Sigmoid colon (tissue), 7 donors: ENCODE measurements at regions of chr7 and their contacts with region 1.

Region 1: DNA sequence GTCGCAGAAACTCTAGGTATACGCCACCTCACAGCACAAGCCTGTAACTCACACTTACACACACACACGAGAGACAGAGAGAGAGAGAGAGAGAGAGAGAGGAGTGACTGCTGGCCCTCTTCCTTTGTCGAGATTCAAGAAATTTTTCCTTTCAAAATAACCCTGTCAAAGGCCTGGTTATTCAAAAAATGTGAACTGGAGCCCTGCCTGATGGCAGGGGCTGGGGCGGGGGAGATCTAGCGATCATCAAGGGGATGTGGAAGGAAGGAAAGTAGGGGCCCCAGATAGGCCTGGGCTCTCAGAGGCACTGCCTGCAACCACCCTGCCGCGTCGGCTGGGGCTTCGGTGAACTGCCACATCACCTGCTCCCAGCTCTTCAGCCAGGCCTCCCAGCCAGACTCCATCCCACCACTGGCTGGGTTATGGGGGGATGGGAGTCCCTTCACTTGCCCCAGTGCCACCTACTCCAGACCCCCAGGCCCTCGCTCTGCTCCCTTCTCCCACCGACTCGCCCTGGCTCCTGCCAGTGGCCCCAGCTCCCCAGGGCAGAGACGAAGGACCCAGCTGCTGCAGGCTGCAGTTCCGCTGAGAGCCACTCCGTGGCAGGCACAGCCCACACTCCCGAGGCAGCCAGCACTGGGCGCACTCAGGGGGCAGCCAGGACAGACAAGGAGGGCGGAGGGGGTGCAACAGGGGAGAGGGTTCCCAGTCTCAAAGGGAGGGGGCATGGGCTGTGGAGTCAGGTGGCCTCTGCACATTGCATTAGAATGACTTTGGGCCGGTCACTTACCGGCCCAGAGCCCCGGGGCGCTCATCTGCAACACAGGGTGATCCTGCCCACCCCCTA is 15.3 kb downstream of the KCNH2 start:
- DNase-seq: peak; percentile 85
- H3K4me3 ChIP-seq: no peak overlapping the region
- H3K27ac ChIP-seq: peak overlapping the region; percentile 79 to 97 (median 90)
- H3K4me1 ChIP-seq: peaks cover 0 to 78% (median 75%) of the 10 kb centered on the region in 4 donors
- H3K27me3 ChIP-seq: no peaks in the 10 kb centered on the region
- CTCF ChIP-seq: peak; percentile 98
- EP300 ChIP-seq: no peak
- POLR2A ChIP-seq: no peak

Region 2: GRCh38 chr7:150378853-150379440 is 583.8 kb before region 1 on chr7 and contains the start of gene ZNF775:
- intact Hi-C with region 1: loop called (anchors 10 kb)
- DNase-seq: peak; percentile 98
- H3K4me3 ChIP-seq: peak within 1 kb of the TSS; percentile 84 to 98 (median 92)
- H3K27ac ChIP-seq: peak within 1 kb of the TSS; percentile 91 to 95 (median 94)
- H3K4me1 ChIP-seq: peaks cover 0 to 53% (median 36%) of the 10 kb centered on the region in 4 donors
- H3K27me3 ChIP-seq: no peaks in the 10 kb centered on the region
- CTCF ChIP-seq: no peak
- EP300 ChIP-seq: peak in 1 of 4 donors; percentile 29
- POLR2A ChIP-seq: peak; percentile 22 to 30
- total RNA-seq, gene ZNF775: 6.1 to 10.7 (median 6.9) TPM

Region 3: DNA sequence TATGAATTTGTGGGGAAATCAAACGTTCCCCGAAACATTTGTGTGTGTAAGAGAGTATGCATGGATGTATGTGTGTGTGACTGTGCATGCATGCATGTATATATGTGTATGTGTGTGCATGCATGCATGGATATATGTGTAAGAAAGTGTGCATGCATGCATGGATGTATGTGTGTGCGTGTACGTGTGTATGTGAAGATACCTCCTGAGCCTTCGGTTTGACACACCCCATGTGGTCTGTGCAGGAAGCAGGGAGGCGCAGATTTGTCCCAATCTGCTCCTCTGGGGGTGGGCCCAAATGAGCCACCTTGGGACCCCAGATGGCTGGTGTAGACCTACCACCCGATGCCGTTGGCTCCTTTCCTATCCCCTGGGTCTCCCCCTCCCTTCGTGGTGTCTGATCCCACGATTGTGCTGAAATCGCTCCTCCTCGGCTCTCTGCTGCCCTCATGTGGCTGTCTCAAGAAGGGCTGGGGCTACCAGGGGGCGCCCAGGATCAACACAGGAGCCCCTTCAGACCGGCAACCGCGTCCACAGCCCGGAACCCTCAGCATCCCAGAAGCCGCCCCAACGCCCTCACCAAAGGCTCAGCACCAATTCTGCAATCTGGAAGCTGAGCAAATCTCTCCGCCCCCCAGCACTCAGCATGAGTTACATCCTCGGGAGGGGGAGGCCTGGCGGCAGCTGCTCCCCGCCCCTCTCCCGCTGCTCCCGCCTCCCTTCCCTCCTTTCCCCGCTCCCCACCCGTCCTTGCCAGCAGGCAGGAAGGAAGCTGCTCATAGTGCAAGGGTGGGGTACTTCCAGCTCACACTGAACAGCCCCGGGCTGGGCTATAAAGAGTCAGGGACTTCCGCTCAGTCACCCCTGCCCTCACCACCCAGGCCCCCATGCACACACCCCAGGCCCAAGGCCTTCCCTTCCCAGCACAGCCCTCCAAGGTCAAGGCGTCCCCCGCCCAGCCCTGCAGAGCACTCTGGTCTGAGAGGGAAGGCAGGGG is 25.8 kb after region 1 on chr7:
- intact Hi-C with region 1: loop called (anchors 1 kb)
- DNase-seq: no peak
- H3K4me3 ChIP-seq: no peak overlapping the region
- H3K27ac ChIP-seq: peak overlapping the region; percentile 12 to 41 (median 30)
- H3K4me1 ChIP-seq: peaks cover 0 to 25% (median 19%) of the 10 kb centered on the region in 4 donors
- H3K27me3 ChIP-seq: no peaks in the 10 kb centered on the region
- CTCF ChIP-seq: peak; percentile 91 to 98 (median 97)
- EP300 ChIP-seq: no peak
- POLR2A ChIP-seq: no peak

Region 4: GRCh38 chr7:151028131-151028947 is 65.6 kb after region 1 on chr7 and contains the start of gene ABCB8:
- intact Hi-C with region 1: loop called (anchors 5 kb)
- DNase-seq: peak; percentile 99
- H3K4me3 ChIP-seq: peak within 1 kb of the TSS; percentile 62 to 77 (median 68)
- H3K27ac ChIP-seq: peak within 1 kb of the TSS; percentile 82 to 89 (median 84)
- H3K4me1 ChIP-seq: peaks cover 0 to 23% (median 15%) of the 10 kb centered on the region in 4 donors
- H3K27me3 ChIP-seq: no peaks in the 10 kb centered on the region
- CTCF ChIP-seq: peak; percentile 24 to 61 (median 38)
- EP300 ChIP-seq: peak in 1 of 4 donors; percentile 39
- POLR2A ChIP-seq: peak in 1 of 2 donors; percentile 16
- total RNA-seq, gene ABCB8: 9.7 to 20.8 (median 19.5) TPM